ENCODE measurements at regions of chr6 and their contacts with region 1.

Region 1: DNA sequence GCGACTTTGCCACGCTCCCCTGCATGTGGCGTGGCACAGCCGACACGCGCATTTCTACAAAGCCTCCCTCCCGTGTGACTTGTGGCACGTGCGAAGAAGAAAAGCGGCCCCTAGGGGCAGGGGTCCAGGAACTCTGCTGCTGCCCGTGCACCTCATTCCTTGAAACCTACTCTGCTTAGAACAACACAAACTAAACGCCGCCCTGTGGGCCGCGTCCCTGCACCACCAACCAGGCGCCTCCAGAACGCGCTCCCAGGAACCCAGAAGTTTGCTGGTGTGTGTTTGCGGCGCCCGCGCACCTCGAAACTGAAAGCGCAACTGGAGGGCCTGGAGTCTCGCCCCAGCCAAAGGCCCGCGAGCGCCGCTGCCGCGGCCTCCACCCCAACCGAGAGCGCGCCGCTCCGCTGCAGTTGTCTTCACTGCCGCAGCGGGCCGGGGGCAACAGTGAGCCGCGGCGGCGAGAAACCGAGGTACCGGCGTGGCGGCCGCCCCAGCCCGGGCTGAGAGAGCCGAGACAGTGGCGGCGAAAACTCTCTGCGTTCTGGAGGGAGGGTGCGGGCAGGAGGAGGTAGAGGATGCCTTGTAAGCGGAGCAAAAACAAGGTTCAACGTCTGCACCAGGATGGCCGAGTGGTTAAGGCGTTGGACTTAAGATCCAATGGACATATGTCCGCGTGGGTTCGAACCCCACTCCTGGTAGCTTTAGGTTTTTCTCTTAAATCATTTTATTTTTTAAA is 65.8 kb downstream of the STX11 start:
- DNase-seq: peak; percentile 88
- H3K4me3 Mint-ChIP-seq: peak overlapping the region; percentile 93
- H3K27ac Mint-ChIP-seq: peak overlapping the region; percentile 95
- H3K4me1 Mint-ChIP-seq: peaks cover 37% of the 10 kb centered on the region
- H3K27me3 Mint-ChIP-seq: peaks cover 6% of the 10 kb centered on the region

Region 2: DNA sequence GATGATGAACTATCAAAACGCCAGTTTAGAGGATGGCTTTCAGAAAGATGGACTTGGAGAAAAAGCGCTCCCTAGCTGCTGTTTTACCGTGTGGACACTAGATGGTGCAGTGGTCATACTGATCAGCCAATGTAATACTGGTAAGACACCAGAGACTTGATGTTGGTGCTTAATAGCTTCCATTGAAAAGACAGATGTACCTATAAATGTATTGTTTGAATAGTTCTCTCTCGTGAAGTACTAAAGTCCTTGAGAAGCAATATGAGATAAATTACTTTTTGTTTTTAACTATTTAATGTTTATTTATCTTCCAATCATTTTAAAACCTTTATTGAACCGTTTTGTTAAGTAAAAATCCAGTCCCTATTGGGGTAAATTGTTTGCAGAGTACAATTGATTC is 640.7 kb before region 1 on chr6:
- intact Hi-C with region 1: loop called (anchors 5 kb)
- DNase-seq: peak; percentile 48
- H3K4me3 Mint-ChIP-seq: no peak overlapping the region
- H3K27ac Mint-ChIP-seq: no peak overlapping the region
- H3K4me1 Mint-ChIP-seq: peaks cover 12% of the 10 kb centered on the region
- H3K27me3 Mint-ChIP-seq: no peaks in the 10 kb centered on the region

Region 3: DNA sequence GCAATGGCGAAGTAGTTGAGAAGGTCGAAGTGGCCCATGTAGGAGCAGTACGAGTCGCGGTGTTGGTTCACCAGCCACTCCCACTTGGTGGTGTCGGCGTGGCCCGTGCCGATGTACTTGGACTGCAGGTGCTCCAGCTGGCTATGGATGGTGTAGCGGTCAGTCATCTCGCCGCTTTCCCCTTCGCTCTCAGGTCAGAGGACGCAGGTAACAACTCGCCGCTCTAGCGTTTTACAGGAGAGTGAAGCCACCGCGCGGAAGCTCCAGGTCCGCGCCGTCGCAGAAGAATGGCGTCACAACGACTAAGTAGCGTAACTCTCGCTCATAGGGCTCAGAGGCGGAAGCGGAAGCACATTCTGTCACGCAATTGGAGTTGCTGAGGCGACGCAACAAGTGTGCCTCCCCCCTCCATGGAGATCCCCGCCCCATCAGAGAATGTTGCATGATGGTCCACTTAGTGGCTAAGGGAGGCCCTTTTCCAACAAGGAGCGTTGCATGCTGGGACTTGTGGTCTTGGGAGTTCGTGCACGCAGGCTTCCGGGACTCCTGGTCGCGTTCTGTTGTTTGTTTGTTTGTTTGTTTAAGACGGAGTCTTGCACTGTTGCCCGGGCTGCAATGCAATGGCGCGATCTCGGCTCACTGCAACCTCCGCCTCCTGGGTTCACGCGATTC is 120.6 kb before region 1 on chr6 and contains the start of gene SF3B5:
- intact Hi-C with region 1: loop called (anchors 1 kb)
- DNase-seq: peak; percentile 96
- H3K4me3 Mint-ChIP-seq: peak within 1 kb of the TSS; percentile 96
- H3K27ac Mint-ChIP-seq: peak within 1 kb of the TSS; percentile 98
- H3K4me1 Mint-ChIP-seq: peaks cover 39% of the 10 kb centered on the region
- H3K27me3 Mint-ChIP-seq: no peaks in the 10 kb centered on the region
- total RNA-seq, gene SF3B5: 204 and 232 TPM in 2 replicates

Region 4: DNA sequence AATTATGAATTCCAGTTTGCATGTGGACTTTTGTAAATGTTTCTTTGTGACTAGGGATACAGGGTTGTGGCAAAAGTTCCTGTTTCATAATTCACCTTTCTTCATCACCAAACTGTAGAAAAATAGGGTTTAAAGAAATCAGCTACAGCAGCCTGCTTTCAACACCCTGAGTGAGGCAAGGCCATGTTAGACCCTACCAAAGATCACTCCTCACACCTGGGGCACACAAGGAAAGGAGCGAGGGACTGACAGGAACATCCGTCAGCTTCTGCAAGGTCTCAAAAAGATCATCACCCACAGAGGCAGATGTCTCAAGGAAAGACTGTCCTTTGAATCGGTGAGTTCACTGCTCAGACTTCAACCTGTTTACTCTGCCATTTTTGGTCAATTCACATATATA is 76.3 kb before region 1 on chr6:
- intact Hi-C with region 1: no loop called
- DNase-seq: no peak
- H3K4me3 Mint-ChIP-seq: no peak overlapping the region
- H3K27ac Mint-ChIP-seq: no peak overlapping the region
- H3K4me1 Mint-ChIP-seq: no peaks in the 10 kb centered on the region
- H3K27me3 Mint-ChIP-seq: peaks cover 4% of the 10 kb centered on the region

Region 5: DNA sequence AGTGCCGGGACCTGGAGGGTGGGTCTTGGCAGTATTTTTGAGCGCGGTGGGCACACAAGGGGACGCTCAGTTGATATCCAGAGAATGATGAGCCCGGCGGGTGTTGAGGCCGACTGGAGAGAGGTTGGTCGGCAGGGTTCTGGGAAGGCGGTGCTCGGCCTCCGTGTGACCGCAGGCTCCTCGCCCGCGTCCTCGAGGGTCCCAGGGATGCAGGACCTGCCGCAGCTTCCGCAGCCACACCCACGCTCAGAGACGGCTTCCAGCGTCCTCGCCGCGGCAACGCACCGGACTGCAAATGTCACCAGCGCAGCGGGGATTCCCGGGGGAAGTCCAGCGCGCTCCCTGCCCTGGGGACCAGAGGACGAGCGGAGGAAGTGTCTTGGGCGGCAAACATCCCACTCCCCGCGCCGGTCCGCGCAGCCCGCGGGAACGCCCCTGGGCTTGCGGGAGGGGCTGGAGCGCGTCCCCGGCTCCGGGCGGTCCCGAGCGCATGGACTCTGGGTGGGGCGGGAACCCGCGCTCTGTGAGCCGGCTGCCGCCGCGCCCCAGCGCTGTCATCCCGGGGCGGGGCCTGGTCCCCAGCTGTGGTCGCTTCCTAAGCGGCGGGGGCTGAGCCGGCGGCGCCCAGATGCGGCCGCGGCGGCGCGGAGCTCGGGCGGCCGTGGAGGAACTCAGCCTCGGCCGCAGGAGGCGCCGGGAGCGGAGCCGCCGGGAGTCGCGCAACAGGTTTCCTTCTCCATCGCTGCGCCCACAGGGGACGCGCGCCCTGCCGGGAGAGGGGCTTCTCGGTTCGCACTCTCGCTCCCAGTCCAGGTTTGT is 66.0 kb before region 1 on chr6 and contains the start of gene STX11:
- intact Hi-C with region 1: loop called (anchors 1 kb)
- DNase-seq: peak; percentile 78
- H3K4me3 Mint-ChIP-seq: peak within 1 kb of the TSS; percentile 91
- H3K27ac Mint-ChIP-seq: peak within 1 kb of the TSS; percentile 98
- H3K4me1 Mint-ChIP-seq: peaks cover 63% of the 10 kb centered on the region
- H3K27me3 Mint-ChIP-seq: peaks cover 1% of the 10 kb centered on the region
- total RNA-seq, gene STX11: 24.2 and 24.7 TPM in 2 replicates

Region 6: DNA sequence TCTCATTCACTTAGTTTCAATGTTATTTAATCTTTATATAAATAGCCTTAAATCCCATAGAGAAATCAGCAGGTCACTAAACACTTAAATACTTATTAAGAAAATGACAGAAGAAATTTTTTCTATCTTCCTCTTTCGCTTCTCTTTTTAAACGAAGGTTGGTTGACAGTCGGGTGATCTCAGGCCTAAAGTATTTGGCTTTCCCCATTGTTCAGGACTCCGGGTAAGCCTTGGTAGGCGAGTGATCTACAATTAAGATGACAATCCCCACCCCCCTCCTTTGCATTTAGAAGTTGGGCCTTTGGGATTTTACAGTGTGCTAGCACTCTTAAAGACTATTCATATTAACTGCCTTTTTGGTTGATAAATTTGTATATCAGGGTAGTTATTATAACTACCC is 49.3 kb after region 1 on chr6:
- intact Hi-C with region 1: no loop called
- DNase-seq: no peak
- H3K4me3 Mint-ChIP-seq: no peak overlapping the region
- H3K27ac Mint-ChIP-seq: no peak overlapping the region
- H3K4me1 Mint-ChIP-seq: no peaks in the 10 kb centered on the region
- H3K27me3 Mint-ChIP-seq: peaks cover 10% of the 10 kb centered on the region

Region 7: DNA sequence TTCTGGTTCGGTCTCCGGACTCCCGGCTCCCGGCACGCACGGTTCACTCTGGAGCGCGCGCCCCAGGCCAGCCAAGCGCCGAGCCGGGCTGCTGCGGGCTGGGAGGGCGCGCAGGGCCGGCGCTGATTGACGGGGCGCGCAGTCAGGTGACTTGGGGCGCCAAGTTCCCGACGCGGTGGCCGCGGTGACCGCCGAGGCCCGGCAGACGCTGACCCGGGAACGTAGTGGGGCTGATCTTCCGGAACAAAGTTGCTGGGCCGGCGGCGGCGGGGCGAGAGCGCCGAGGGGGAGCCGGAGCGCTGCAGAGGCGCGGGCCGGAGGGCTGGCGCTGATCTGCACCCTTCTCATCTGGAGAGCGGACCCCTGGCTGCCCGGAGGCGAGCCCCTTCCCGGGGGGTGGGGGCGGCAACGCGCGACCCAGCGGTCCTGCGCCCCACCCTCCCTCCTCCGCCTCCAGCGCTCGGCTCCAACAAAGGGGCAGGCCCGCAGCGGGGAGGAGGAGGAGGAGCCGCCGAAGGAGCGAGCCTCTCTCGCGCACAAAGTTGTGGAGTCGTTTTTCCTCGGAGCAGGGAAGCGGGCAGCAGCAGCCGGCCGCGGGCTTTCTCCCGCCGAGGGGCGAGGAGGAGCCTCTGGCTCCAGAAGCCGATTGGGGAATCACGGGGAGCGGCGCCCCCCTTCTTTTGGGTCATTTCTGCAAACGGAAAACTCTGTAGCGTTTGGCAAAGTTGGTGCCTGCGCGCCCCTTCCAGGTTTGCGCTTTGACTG is 68.9 kb after region 1 on chr6 and contains the start of gene UTRN:
- intact Hi-C with region 1: loop called (anchors 2 kb)
- DNase-seq: peak; percentile 29
- H3K4me3 Mint-ChIP-seq: peak within 1 kb of the TSS; percentile 93
- H3K27ac Mint-ChIP-seq: peak within 1 kb of the TSS; percentile 64
- H3K4me1 Mint-ChIP-seq: peaks cover 19% of the 10 kb centered on the region
- H3K27me3 Mint-ChIP-seq: peaks cover 33% of the 10 kb centered on the region
- total RNA-seq, gene UTRN: 48.3 and 50.6 TPM in 2 replicates

Region 8: GRCh38 chr6:144482142-144482541 is 266.0 kb after region 1 on chr6:
- intact Hi-C with region 1: loop called (anchors 1 kb)
- DNase-seq: peak; percentile 48
- H3K4me3 Mint-ChIP-seq: no peak overlapping the region
- H3K27ac Mint-ChIP-seq: no peak overlapping the region
- H3K4me1 Mint-ChIP-seq: peaks cover 15% of the 10 kb centered on the region
- H3K27me3 Mint-ChIP-seq: no peaks in the 10 kb centered on the region